Activated naive CD4-positive, alpha-beta T cell treated with anti-CD3 and anti-CD28 coated beads, Interleukin-2, amount 10 ng/mL, durations not matched to agents 7 days and 5 days (primary cell): ENCODE measurements at regions of chr7 and their contacts with region 1.

Region 1: GRCh38 chr7:106176414-106177299 is 64.5 kb upstream of the SYPL1 start:
- DNase-seq: peak; percentile 79
- H3K4me3 Mint-ChIP-seq: no peak overlapping the region
- H3K27ac Mint-ChIP-seq: no peak overlapping the region
- H3K4me1 Mint-ChIP-seq: peaks cover under 1% of the 10 kb centered on the region
- H3K27me3 Mint-ChIP-seq: peaks cover 42% of the 10 kb centered on the region

Region 2: GRCh38 chr7:106112117-106112971 is 64.3 kb before region 1 on chr7 and contains the start of gene SYPL1:
- CTCF ChIA-PET with region 1: no interaction called
- DNase-seq: peak; percentile 95
- H3K4me3 Mint-ChIP-seq: peak within 1 kb of the TSS; percentile 86
- H3K27ac Mint-ChIP-seq: peak within 1 kb of the TSS; percentile 91
- H3K4me1 Mint-ChIP-seq: peaks cover 52% of the 10 kb centered on the region
- H3K27me3 Mint-ChIP-seq: peaks cover 4% of the 10 kb centered on the region

Region 3: GRCh38 chr7:106367018-106367420 is 190.4 kb after region 1 on chr7:
- CTCF ChIA-PET with region 1: interaction called, 15 read pairs
- DNase-seq: no peak
- H3K4me3 Mint-ChIP-seq: no peak overlapping the region
- H3K27ac Mint-ChIP-seq: no peak overlapping the region
- H3K4me1 Mint-ChIP-seq: no peaks in the 10 kb centered on the region
- H3K27me3 Mint-ChIP-seq: peaks cover 10% of the 10 kb centered on the region

Region 4: DNA sequence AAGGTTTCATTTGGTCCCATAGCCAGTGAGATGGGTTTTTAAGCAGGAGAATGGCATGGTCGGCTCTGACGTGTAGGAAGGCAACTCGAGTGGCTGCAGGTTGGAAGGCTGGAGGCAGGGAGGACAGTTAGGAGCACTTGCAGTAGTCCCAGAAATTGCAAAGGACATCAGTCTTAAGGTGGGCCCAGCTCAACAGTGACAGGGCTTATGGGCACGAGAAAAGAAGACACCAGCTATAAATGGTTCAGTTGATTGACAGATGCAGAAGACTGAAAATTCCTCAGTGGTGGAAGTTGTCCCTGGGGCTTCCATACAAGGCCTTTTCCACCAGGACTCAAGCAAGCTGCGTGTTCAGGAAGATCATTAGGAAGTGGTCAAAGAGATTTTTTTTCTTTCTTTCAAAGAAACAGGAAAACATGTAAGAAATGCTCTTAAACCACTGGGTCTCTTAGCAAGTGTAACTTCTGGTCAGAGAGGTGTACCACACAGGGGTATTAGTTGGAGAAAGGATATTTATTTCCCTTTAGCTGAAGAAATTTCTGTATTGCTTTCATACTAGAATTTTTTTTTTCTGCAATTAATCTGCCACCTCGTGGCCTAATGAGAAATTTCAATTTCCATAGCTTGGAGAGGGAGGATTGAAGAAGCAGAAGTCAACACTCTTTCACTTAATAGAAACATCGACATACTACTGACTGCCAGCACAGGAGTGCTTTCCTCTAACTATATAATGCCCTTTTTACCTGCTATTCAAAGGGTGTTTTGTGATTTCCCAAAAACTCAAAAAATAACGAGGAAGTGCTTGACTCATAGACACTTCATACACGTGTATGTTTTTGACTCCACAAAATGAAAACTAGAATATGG is 285.6 kb after region 1 on chr7:
- CTCF ChIA-PET with region 1: interaction called, 197 read pairs
- DNase-seq: no peak
- H3K4me3 Mint-ChIP-seq: no peak overlapping the region
- H3K27ac Mint-ChIP-seq: no peak overlapping the region
- H3K4me1 Mint-ChIP-seq: no peaks in the 10 kb centered on the region
- H3K27me3 Mint-ChIP-seq: no peaks in the 10 kb centered on the region